ENCODE measurements at regions of chr7 and their contacts with region 1.

Region 1: GRCh38 chr7:24819916-24820689 is 62.8 kb upstream of the GSDME start:
- DNase-seq: peak; percentile 45 to 89 (median 62)
- ATAC-seq: peak; percentile 7
- H3K4me3 ChIP-seq: peak overlapping the region; percentile 15
- H3K4me3 Mint-ChIP-seq: peak overlapping the region; percentile 84
- H3K27ac ChIP-seq: peak overlapping the region; percentile 86 to 87
- H3K27ac Mint-ChIP-seq: peak overlapping the region; percentile 97
- H3K4me1 ChIP-seq: peaks cover 34% of the 10 kb centered on the region
- H3K4me1 Mint-ChIP-seq: peaks cover 38% of the 10 kb centered on the region
- H3K27me3 ChIP-seq: no peaks in the 10 kb centered on the region
- H3K27me3 Mint-ChIP-seq: no peaks in the 10 kb centered on the region
- CTCF ChIP-seq: peak; percentile 95

Region 2: DNA sequence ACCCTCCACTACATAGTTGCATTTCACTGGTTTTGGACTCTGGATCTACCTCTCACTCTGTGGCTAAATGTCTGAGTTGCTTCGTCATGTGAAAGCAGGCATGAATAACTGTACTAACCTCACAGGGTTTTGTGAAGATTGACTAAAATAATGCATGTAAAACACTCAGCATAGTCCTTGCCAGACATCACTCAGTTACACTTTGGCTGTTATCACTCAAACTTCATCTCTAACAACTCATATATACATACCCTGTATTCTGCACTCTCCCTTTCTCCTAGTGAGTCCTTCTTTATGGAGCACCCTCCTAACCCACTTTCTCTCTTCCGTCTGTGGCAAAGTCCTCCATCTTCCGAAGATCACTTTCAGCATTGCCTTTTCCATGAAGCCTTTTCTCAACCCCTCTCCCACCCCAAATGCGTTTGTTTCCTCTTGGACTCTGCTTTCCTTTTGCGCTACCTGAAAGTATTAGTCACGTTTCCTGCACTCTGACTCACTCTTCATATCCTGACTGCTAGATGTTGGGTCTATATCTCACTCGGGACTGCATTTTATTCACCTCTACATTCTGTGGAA is 87.3 kb after region 1 on chr7:
- CTCF ChIA-PET with region 1: interaction called, 12 read pairs
- POLR2A ChIA-PET with region 1: interaction called, 11 read pairs
- intact Hi-C with region 1: loop called in 1 of 2 experiments (anchors 5 kb)
- DNase-seq: peak in 7 of 14 experiments; percentile 3 to 73 (median 44)
- ATAC-seq: peak; percentile 76
- H3K4me3 ChIP-seq: peak overlapping the region; percentile 9
- H3K4me3 Mint-ChIP-seq: no peak overlapping the region
- H3K27ac ChIP-seq: no peak overlapping the region
- H3K27ac Mint-ChIP-seq: no peak overlapping the region
- H3K4me1 ChIP-seq: peaks cover 60% of the 10 kb centered on the region
- H3K4me1 Mint-ChIP-seq: peaks cover 32% of the 10 kb centered on the region
- H3K27me3 ChIP-seq: no peaks in the 10 kb centered on the region
- H3K27me3 Mint-ChIP-seq: no peaks in the 10 kb centered on the region
- CTCF ChIP-seq: no peak

Region 3: DNA sequence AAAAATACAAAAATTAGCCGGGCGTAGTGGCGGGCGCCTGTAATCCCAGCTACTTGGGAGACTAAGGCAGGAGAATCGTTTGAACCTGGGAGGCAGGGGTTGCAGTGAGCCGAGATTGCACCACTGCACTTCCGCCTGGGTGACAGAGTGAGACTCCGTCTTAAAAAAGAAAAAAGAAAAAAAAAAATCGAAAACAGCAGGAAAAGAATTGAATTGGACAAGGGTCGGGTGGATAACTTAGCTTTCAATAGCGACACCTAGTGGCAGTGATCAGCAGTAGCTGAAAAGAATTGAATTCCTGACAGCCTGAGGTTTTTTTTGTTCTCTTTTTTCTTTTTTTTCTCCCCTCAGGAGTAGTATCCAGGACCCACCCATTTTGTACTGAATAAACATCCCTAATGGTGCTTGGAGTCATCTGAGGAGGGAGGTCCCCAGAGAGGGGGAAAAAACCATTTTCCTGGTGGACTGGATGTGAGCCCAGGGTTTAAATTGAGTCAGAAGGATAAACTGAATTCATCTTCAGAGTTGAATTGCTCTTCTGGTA is 249.9 kb after region 1 on chr7:
- CTCF ChIA-PET with region 1: interaction called, 17 read pairs
- POLR2A ChIA-PET with region 1: interaction called, 17 read pairs
- intact Hi-C with region 1: loop called (anchors 1 kb)
- DNase-seq: peak in 11 of 14 experiments; percentile 6 to 82 (median 36)
- ATAC-seq: peak; percentile 66
- H3K4me3 ChIP-seq: no peak overlapping the region
- H3K4me3 Mint-ChIP-seq: no peak overlapping the region
- H3K27ac ChIP-seq: no peak overlapping the region
- H3K27ac Mint-ChIP-seq: no peak overlapping the region
- H3K4me1 ChIP-seq: peaks cover 3% of the 10 kb centered on the region
- H3K4me1 Mint-ChIP-seq: no peaks in the 10 kb centered on the region
- H3K27me3 ChIP-seq: no peaks in the 10 kb centered on the region
- H3K27me3 Mint-ChIP-seq: no peaks in the 10 kb centered on the region
- CTCF ChIP-seq: peak; percentile 96

Region 4: DNA sequence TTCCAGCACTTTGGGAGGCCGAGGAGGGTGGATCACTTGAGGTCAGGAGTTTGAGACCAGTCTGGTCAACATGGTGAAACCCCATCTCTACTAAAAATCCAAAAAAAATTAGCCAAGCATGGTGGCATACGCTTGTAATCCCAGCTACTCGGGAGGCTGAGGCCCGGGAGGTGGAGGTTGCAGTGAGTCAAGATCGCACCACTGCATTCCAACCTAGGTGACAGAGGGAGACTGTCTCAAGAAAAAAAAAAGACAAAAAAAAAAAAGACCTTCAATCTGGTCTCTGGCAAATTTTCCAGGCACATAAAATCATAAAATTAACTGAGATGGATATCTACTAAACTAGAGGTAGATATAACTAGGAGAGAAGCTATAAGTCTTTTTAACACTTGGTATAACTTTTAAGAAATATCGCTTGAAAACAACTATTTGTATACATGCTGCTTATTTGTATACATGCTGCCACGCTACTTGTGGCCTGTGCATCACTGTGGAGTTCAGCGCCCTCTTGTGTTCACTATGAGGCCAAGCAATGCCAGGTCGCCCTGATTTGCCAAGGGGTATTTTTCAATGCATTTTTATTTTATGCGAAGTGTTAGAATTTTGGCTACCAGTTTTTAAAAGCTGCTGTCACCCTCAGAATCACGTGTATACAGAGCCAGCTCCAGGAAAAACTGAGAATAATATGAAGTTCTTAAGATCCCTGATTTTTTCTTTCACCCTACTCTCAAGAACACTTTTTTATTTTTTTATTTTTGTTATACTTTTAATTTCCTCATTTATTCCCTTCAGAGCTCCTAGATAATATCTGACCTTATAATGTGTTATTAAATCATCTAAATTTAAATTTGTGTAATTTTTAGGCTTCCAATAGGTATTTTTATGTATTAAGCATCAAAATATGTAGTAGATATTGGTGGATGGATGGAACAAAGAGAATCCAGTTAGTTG is 278.3 kb after region 1 on chr7:
- CTCF ChIA-PET with region 1: interaction called, 28 read pairs
- POLR2A ChIA-PET with region 1: interaction called, 5 read pairs
- intact Hi-C with region 1: loop called in 1 of 2 experiments (anchors 1 kb)
- DNase-seq: peak; percentile 26 to 84 (median 42)
- ATAC-seq: peak; percentile 87
- H3K4me3 ChIP-seq: no peak overlapping the region
- H3K4me3 Mint-ChIP-seq: no peak overlapping the region
- H3K27ac ChIP-seq: no peak overlapping the region
- H3K27ac Mint-ChIP-seq: no peak overlapping the region
- H3K4me1 ChIP-seq: peaks cover 8% of the 10 kb centered on the region
- H3K4me1 Mint-ChIP-seq: peaks cover 9% of the 10 kb centered on the region
- H3K27me3 ChIP-seq: no peaks in the 10 kb centered on the region
- H3K27me3 Mint-ChIP-seq: peaks cover 1% of the 10 kb centered on the region
- CTCF ChIP-seq: peak; percentile 85

Region 5: GRCh38 chr7:25196132-25196891 is 376.2 kb after region 1 on chr7:
- CTCF ChIA-PET with region 1: no interaction called
- POLR2A ChIA-PET with region 1: no interaction called
- intact Hi-C with region 1: no loop called
- DNase-seq: no peak
- ATAC-seq: no peak
- H3K4me3 ChIP-seq: no peak overlapping the region
- H3K4me3 Mint-ChIP-seq: no peak overlapping the region
- H3K27ac ChIP-seq: no peak overlapping the region
- H3K27ac Mint-ChIP-seq: no peak overlapping the region
- H3K4me1 ChIP-seq: no peaks in the 10 kb centered on the region
- H3K4me1 Mint-ChIP-seq: no peaks in the 10 kb centered on the region
- H3K27me3 ChIP-seq: peaks cover 4 to 6% of the 10 kb centered on the region in 2 experiments
- H3K27me3 Mint-ChIP-seq: peaks cover 5% of the 10 kb centered on the region
- CTCF ChIP-seq: no peak

Measured in CD4-positive, alpha-beta T cell (primary cell).